CD8-positive, alpha-beta T cell (primary cell): ENCODE measurements at regions of chr1 and their contacts with region 1.

Region 1: GRCh38 chr1:63522891-63523728 is at the starts of genes EFCAB7 and ITGB3BP:
- DNase-seq: peak; percentile 65 to 90 (median 81)
- ATAC-seq: peak; percentile 85
- H3K4me3 ChIP-seq: peak within 1 kb of the TSS; percentile 67 to 80
- H3K4me3 Mint-ChIP-seq: peak within 1 kb of the TSS; percentile 97
- H3K27ac ChIP-seq: peak within 1 kb of the TSS; percentile 79 to 90
- H3K27ac Mint-ChIP-seq: peak within 1 kb of the TSS; percentile 95
- H3K4me1 ChIP-seq: peaks cover 25% of the 10 kb centered on the region
- H3K4me1 Mint-ChIP-seq: peaks cover 27% of the 10 kb centered on the region
- H3K27me3 ChIP-seq: no peaks in the 10 kb centered on the region
- H3K27me3 Mint-ChIP-seq: no peaks in the 10 kb centered on the region
- CTCF ChIP-seq: no peak
- total RNA-seq, gene EFCAB7: 6.5 to 8.2 TPM
- total RNA-seq, gene ITGB3BP: 7.9 to 8.6 TPM

Region 2: DNA sequence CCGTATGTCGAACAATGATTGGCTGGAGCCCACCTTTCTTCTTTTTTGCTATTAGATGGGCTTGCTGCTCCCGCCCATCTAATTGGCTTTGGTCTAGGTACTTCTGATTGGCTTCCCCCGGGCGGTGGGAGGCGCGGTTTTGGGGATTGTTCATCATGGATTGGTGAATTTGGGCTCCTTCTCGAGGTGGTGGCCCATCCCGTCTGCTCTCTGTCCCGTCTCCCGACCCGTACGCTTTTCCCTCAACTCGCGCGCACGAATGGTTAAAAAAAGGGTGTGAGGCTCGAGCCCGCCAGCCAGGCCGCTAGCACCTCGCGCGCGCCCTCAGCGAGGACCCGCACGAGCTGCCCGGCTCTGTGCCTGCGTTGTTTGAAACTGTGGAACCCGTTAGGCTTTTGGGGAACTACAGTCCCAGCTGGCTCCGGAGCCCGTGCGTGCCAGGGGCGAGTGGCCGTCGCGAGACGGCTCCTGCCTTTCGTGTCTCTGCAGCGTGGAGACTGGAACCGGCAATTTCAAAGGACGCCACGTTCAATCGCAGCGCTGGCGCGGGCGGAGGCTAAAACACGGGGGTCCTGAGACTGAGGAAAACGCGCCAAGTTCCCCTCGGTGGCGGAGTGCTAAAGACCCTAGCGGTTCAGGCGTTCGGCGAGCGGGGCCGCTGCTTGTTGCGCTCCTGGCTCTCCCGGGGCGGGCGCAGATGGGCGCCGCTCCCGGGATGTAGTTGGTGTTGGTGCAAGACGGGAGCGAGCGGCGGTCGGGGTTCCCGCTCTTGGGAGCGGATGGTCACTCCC is 1086.4 kb before region 1 on chr1 and contains the start of gene USP1:
- CTCF ChIA-PET with region 1: no interaction called
- POLR2A ChIA-PET with region 1: no interaction called
- intact Hi-C with region 1: loop called (anchors 2 to 5 kb)
- DNase-seq: peak; percentile 94 to 100 (median 96)
- ATAC-seq: peak; percentile 82
- H3K4me3 ChIP-seq: peak within 1 kb of the TSS; percentile 90 to 97
- H3K4me3 Mint-ChIP-seq: peak within 1 kb of the TSS; percentile 98
- H3K27ac ChIP-seq: peak within 1 kb of the TSS; percentile 96 to 98
- H3K27ac Mint-ChIP-seq: peak within 1 kb of the TSS; percentile 100
- H3K4me1 ChIP-seq: peaks cover 33% of the 10 kb centered on the region
- H3K4me1 Mint-ChIP-seq: peaks cover 40% of the 10 kb centered on the region
- H3K27me3 ChIP-seq: no peaks in the 10 kb centered on the region
- H3K27me3 Mint-ChIP-seq: no peaks in the 10 kb centered on the region
- CTCF ChIP-seq: no peak
- total RNA-seq, gene USP1: 23.1 to 23.7 TPM

Region 3: DNA sequence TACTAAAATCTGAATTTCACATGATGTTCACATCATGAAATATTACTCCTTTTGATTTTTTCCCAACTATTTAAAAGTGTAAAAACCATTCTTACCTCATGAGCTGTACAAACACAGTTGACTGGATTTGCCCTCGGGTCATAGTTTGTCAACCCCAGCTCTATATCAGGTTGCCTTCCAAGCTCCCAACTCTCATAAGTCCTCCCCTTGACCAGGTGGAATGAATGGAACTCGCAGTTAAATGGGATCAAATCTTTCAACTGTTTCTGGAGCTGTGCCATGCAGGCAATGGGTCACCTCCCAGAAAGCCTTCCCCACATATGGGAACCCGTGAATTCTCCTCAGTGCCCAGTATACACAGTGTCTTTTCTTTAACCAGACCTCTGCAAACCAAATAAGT is 370.5 kb before region 1 on chr1:
- CTCF ChIA-PET with region 1: no interaction called
- POLR2A ChIA-PET with region 1: no interaction called
- intact Hi-C with region 1: no loop called
- DNase-seq: no peak
- ATAC-seq: no peak
- H3K4me3 ChIP-seq: no peak overlapping the region
- H3K4me3 Mint-ChIP-seq: no peak overlapping the region
- H3K27ac ChIP-seq: no peak overlapping the region
- H3K27ac Mint-ChIP-seq: no peak overlapping the region
- H3K4me1 ChIP-seq: no peaks in the 10 kb centered on the region
- H3K4me1 Mint-ChIP-seq: no peaks in the 10 kb centered on the region
- H3K27me3 ChIP-seq: no peaks in the 10 kb centered on the region
- H3K27me3 Mint-ChIP-seq: peaks cover 17% of the 10 kb centered on the region
- CTCF ChIP-seq: no peak

Region 4: GRCh38 chr1:63316984-63317816 is 205.9 kb before region 1 on chr1:
- CTCF ChIA-PET with region 1: no interaction called
- POLR2A ChIA-PET with region 1: no interaction called
- intact Hi-C with region 1: loop called in 1 of 2 experiments (anchors 2 kb)
- DNase-seq: peak in 3 of 9 experiments; percentile 41 to 54 (median 50)
- ATAC-seq: peak; percentile 43
- H3K4me3 ChIP-seq: peak overlapping the region in 1 of 2 experiments; percentile 3
- H3K4me3 Mint-ChIP-seq: peak overlapping the region; percentile 40
- H3K27ac ChIP-seq: no peak overlapping the region
- H3K27ac Mint-ChIP-seq: no peak overlapping the region
- H3K4me1 ChIP-seq: peaks cover 16% of the 10 kb centered on the region
- H3K4me1 Mint-ChIP-seq: peaks cover 30% of the 10 kb centered on the region
- H3K27me3 ChIP-seq: peaks cover 49 to 60% of the 10 kb centered on the region in 2 experiments
- H3K27me3 Mint-ChIP-seq: peaks cover 63% of the 10 kb centered on the region
- CTCF ChIP-seq: no peak

Region 5: DNA sequence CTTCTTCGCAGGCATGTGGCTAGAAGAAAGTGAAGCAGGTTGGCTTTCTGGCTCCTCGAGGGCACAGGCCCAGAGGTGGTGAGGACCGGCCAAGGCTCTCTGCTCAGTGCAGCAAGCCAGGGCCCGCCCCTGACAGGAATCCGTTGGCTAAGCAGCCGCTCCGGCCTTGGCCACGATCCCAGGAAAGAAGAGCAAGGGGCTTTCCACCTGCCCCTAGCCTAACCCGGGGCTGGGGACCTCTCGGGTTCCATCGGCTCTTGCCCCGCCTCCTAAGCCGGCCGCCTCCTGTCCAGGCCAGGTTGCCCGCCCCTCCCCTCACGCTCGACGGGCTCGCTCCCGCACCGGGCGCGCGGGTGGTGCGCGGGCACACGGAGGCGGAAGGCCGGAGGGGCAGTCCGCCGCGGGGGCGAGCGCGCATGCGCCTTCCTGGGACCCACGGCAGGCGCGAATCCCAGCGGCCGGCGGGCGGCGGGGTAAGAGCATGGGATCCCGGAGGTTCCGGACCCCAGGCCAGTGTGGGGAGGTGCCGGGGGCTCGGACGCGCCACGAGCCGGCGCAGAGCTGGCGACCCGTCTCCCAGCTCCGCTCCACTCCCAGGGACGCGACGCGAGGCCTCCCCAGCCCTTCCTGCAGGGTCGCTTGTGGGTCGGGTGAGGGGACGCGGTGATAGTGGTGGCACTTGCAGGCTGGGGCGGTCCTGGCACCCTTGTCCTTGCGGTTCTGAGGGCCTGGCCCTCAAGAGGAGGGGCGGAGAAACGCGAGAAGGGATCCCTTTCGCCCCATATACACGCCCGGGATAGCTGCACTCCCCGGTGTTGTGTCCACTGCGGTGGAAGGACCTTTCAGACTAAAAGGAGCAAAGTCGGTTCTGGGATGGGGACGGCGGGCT is 155.7 kb before region 1 on chr1 and contains the start of gene ALG6:
- CTCF ChIA-PET with region 1: no interaction called
- POLR2A ChIA-PET with region 1: no interaction called
- intact Hi-C with region 1: loop called (anchors 1 to 2 kb)
- DNase-seq: peak; percentile 79 to 97 (median 89)
- ATAC-seq: peak; percentile 86
- H3K4me3 ChIP-seq: peak within 1 kb of the TSS; percentile 87 to 97
- H3K4me3 Mint-ChIP-seq: peak within 1 kb of the TSS; percentile 96
- H3K27ac ChIP-seq: peak within 1 kb of the TSS; percentile 61 to 73
- H3K27ac Mint-ChIP-seq: peak within 1 kb of the TSS; percentile 88
- H3K4me1 ChIP-seq: peaks cover 14% of the 10 kb centered on the region
- H3K4me1 Mint-ChIP-seq: peaks cover 36% of the 10 kb centered on the region
- H3K27me3 ChIP-seq: peaks cover 0 to 2% of the 10 kb centered on the region in 2 experiments
- H3K27me3 Mint-ChIP-seq: peaks cover 8% of the 10 kb centered on the region
- CTCF ChIP-seq: no peak
- total RNA-seq, gene ALG6: 10.0 to 10.3 TPM

Region 6: DNA sequence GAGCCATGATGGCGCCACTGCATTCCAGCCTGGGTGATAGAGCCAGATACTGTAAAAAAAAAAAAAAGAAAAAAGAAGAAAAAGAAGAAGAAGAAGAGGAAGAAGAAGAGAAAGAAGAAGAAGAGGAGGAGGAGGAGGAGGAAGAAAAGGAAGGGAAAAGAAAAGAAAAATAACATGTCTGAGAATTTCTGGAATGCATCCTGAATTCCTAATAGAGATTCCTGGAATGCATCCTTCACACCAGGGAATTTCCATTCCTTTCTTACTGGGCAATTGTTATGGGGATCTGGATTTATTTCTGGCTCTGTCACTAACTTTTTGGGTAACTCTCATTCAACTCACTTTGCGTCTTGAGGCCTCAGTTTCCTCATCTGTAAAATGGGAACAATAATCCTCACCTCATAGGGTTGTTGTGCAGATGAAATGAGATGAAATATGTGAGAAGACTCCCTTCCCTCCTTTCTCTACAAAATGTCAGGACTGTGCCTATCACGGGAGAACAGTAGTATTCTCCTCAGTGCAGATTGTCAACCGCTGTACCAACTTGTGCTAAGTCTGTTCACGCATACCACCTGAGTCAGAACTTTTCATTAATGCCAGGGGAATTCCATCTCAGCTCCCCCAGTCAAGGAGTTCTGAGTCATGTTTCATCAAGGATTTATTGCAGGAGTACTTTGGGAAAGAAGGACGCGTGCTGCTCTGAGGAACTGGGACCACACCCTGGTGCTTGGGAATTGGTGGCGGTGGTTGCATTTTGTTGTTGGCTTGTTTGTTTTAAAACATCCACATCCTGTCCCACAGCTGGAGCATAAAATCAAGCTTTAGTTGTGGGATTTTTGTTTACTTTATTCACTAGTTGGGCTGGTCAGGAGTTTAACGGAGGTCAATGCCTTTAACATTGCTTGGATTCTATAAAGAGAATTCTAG is 208.3 kb after region 1 on chr1:
- CTCF ChIA-PET with region 1: no interaction called
- POLR2A ChIA-PET with region 1: no interaction called
- intact Hi-C with region 1: no loop called
- DNase-seq: no peak
- ATAC-seq: no peak
- H3K4me3 ChIP-seq: no peak overlapping the region
- H3K4me3 Mint-ChIP-seq: no peak overlapping the region
- H3K27ac ChIP-seq: no peak overlapping the region
- H3K27ac Mint-ChIP-seq: no peak overlapping the region
- H3K4me1 ChIP-seq: no peaks in the 10 kb centered on the region
- H3K4me1 Mint-ChIP-seq: no peaks in the 10 kb centered on the region
- H3K27me3 ChIP-seq: no peaks in the 10 kb centered on the region
- H3K27me3 Mint-ChIP-seq: peaks cover 3% of the 10 kb centered on the region
- CTCF ChIP-seq: no peak

Region 7: DNA sequence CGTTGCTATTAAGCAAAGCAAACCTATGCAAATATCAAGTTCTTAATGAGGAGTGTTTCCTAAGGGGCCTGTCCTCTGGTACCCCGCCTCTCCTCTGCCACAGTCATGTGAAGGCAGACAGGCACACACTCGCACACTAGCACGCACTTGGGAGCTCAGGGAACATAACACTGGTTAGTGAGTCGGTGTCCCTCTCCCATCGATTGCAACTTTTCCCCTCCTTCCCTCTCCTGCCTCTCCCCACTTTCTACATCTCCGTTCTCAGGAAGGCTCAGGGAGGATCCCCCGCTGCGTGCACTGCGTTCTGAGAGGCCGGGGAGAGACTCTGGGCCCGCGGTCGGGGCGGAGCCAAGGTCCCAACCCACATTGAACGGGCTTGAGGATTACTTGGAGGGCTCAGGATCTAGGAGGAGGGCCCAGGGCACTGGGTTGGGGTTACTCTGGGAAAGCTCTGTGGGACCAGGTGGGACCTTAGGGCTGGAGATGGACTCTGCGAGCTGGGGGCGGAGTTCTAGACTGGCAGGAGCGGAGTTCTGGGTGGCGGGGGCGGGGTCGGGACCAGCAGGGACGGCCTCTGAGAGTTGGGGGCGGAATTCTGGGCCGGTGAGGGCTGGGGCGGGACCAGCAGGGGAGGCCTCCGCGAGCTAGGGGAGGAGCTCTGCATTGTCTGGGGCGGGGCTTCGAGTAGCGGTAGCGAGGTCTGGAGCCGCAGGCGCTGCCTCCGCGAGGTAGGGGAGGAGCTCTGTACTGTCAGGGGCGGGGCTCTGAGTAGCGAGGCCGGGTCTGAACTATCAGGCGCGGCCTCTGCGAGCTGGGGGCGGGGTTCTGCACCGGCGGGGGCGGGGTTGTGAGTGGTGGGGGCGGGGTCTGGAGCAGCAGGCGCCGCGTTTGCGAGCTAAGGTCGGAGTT is 1896.8 kb after region 1 on chr1:
- CTCF ChIA-PET with region 1: no interaction called
- POLR2A ChIA-PET with region 1: no interaction called
- intact Hi-C with region 1: loop called in 1 of 2 experiments (anchors 5 kb)
- DNase-seq: peak; percentile 97 to 99 (median 98)
- ATAC-seq: peak; percentile 94
- H3K4me3 ChIP-seq: peak overlapping the region; percentile 96 to 98
- H3K4me3 Mint-ChIP-seq: no peak overlapping the region
- H3K27ac ChIP-seq: peak overlapping the region; percentile 69 to 71
- H3K27ac Mint-ChIP-seq: peak overlapping the region; percentile 93
- H3K4me1 ChIP-seq: peaks cover 15% of the 10 kb centered on the region
- H3K4me1 Mint-ChIP-seq: peaks cover 21% of the 10 kb centered on the region
- H3K27me3 ChIP-seq: peaks cover 0 to 3% of the 10 kb centered on the region in 2 experiments
- H3K27me3 Mint-ChIP-seq: no peaks in the 10 kb centered on the region
- CTCF ChIP-seq: no peak